ENCODE measurements at regions of chr17 and their contacts with region 1.

Region 1: GRCh38 chr17:7989781-7990655 is 12.4 kb upstream of the GUCY2D start:
- DNase-seq: peak; percentile 83 to 100
- H3K4me3 ChIP-seq: peak overlapping the region; percentile 53 to 68 (median 63)
- H3K27ac ChIP-seq: no peak overlapping the region
- H3K4me1 ChIP-seq: peaks cover 0 to 2% (median 0%) of the 10 kb centered on the region in 4 experiments; a peak in 1 of 7 replicates
- H3K27me3 ChIP-seq: peaks cover 0 to 16% (median 9%) of the 10 kb centered on the region in 4 experiments; a peak in 4 of 7 replicates
- CTCF ChIP-seq: peak; percentile 93 to 97 (median 97)
- EP300 ChIP-seq: no peak
- POLR2A ChIP-seq: peak in 1 of 2 experiments; percentile 32; a peak in 1 of 3 replicates
- RAD21 ChIP-seq: peak; percentile 62 to 77

Region 2: DNA sequence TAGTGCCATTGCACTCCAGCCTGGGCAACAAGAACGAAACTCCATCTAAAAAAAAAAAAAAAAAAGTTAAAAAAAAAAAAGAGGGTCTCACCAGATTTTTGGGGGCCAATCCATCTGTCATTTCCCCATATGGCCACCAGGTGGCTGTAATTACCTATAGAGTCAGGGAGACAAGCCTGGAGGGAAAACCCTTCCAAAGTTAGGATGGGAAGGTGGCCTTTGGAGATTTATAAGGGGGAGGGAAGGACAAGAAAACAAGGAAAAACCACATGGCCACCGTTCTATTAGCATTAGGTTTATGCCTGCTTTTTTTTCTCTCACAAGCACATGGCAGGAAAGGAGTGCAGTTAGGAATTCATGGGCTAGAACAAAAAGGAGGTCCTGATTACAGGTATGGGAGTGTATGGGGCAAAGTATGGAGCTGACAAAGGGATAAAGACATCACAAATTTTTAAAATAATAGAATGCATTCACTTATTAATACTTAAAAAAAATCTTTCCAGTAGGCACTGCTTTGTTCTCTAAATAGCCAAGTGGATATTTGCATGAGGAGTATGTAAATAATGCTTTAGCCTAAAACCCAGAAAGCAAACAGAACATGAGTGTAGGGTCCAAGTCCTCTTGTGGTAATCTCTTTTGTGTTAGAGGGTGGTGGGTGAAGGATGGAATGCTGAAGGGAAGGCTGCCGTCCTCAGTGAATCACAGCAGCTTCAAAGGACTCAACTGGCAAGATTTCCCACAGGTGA is 127.2 kb before region 1 on chr17:
- CTCF ChIA-PET with region 1: interaction called, 15 read pairs
- POLR2A ChIA-PET with region 1: interaction called, 3 read pairs
- DNase-seq: peak in 1 of 2 experiments; percentile 78
- H3K4me3 ChIP-seq: no peak overlapping the region
- H3K27ac ChIP-seq: no peak overlapping the region
- H3K4me1 ChIP-seq: peaks cover 0 to 2% (median 0%) of the 10 kb centered on the region in 4 experiments; a peak in 2 of 7 replicates
- H3K27me3 ChIP-seq: no peaks in the 10 kb centered on the region
- CTCF ChIP-seq: peak; percentile 10 to 80 (median 66)
- EP300 ChIP-seq: no peak
- POLR2A ChIP-seq: no peak
- RAD21 ChIP-seq: peak; percentile 83 to 84

Region 3: GRCh38 chr17:7915611-7916382 is 74.2 kb before region 1 on chr17 and contains the start of gene RNF227:
- CTCF ChIA-PET with region 1: interaction called, 64 read pairs
- POLR2A ChIA-PET with region 1: no interaction called
- DNase-seq: peak in 1 of 2 experiments; percentile 92
- H3K4me3 ChIP-seq: peak within 1 kb of the TSS; percentile 30 to 53 (median 37)
- H3K27ac ChIP-seq: no peak within 1 kb of the TSS
- H3K4me1 ChIP-seq: peaks cover 0 to 6% (median 6%) of the 10 kb centered on the region in 4 experiments; a peak in 5 of 7 replicates
- H3K27me3 ChIP-seq: peaks cover 10 to 30% (median 26%) of the 10 kb centered on the region in 4 experiments
- CTCF ChIP-seq: no peak
- EP300 ChIP-seq: no peak
- POLR2A ChIP-seq: no peak
- RAD21 ChIP-seq: no peak
- total RNA-seq, gene RNF227: 0.63 and 0.77 TPM in 2 replicates

Region 4: GRCh38 chr17:7944326-7944725 is 45.7 kb before region 1 on chr17:
- CTCF ChIA-PET with region 1: interaction called, 13 read pairs
- POLR2A ChIA-PET with region 1: no interaction called
- DNase-seq: no peak
- H3K4me3 ChIP-seq: no peak overlapping the region
- H3K27ac ChIP-seq: no peak overlapping the region
- H3K4me1 ChIP-seq: no peaks in the 10 kb centered on the region
- H3K27me3 ChIP-seq: no peaks in the 10 kb centered on the region
- CTCF ChIP-seq: no peak
- EP300 ChIP-seq: no peak
- POLR2A ChIP-seq: no peak
- RAD21 ChIP-seq: no peak

Region 5: DNA sequence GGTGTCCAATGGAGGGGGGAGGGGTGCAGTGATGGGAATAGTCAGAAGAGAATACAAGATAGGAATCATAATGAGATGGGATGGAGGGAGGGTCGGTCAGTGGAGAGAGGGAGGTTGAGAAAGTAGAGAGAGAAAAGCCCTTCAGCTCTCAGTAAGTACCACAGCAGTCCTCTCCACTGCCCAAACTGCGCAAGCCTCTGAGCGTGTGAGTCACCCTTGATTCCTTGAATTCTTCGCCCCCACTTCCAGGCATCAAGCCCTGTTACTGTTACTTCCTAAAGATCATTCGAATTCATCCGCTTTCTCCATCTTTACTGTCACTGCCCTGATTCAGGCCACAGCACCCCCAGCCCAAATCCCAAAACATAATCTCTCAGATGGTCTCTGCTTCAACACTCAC is 14.9 kb after region 1 on chr17:
- CTCF ChIA-PET with region 1: interaction called, 11 read pairs
- POLR2A ChIA-PET with region 1: interaction called, 4 read pairs
- DNase-seq: no peak
- H3K4me3 ChIP-seq: no peak overlapping the region
- H3K27ac ChIP-seq: no peak overlapping the region
- H3K4me1 ChIP-seq: peaks cover 0 to 9% (median 4%) of the 10 kb centered on the region in 4 experiments; a peak in 5 of 7 replicates
- H3K27me3 ChIP-seq: peaks cover 35 to 53% (median 42%) of the 10 kb centered on the region in 4 experiments
- CTCF ChIP-seq: no peak
- EP300 ChIP-seq: no peak
- POLR2A ChIP-seq: no peak
- RAD21 ChIP-seq: no peak

Region 6: GRCh38 chr17:8138672-8139371 is 148.8 kb after region 1 on chr17:
- CTCF ChIA-PET with region 1: no interaction called
- POLR2A ChIA-PET with region 1: no interaction called
- DNase-seq: peak; percentile 94 to 100
- H3K4me3 ChIP-seq: peak overlapping the region; percentile 86 to 98 (median 92)
- H3K27ac ChIP-seq: peak overlapping the region; percentile 81
- H3K4me1 ChIP-seq: peaks cover 0 to 7% (median 4%) of the 10 kb centered on the region in 4 experiments; a peak in 4 of 7 replicates
- H3K27me3 ChIP-seq: peaks cover 0 to 7% (median 2%) of the 10 kb centered on the region in 4 experiments; a peak in 4 of 7 replicates
- CTCF ChIP-seq: peak; percentile 63 to 96 (median 78)
- EP300 ChIP-seq: peak in 1 of 2 experiments; percentile 89; a peak in 1 of 3 replicates
- POLR2A ChIP-seq: peak in 1 of 2 experiments; percentile 59; a peak in 1 of 3 replicates
- RAD21 ChIP-seq: peak; percentile 58 to 62

Measured in H1 (cell line).